Cardiac septum (tissue), 1 donor: ENCODE measurements at regions of chr13 and their contacts with region 1.

Region 1: GRCh38 chr13:47521890-47522487 is 479.1 kb downstream of the SUCLA2 start:
- DNase-seq: no peak

Region 2: DNA sequence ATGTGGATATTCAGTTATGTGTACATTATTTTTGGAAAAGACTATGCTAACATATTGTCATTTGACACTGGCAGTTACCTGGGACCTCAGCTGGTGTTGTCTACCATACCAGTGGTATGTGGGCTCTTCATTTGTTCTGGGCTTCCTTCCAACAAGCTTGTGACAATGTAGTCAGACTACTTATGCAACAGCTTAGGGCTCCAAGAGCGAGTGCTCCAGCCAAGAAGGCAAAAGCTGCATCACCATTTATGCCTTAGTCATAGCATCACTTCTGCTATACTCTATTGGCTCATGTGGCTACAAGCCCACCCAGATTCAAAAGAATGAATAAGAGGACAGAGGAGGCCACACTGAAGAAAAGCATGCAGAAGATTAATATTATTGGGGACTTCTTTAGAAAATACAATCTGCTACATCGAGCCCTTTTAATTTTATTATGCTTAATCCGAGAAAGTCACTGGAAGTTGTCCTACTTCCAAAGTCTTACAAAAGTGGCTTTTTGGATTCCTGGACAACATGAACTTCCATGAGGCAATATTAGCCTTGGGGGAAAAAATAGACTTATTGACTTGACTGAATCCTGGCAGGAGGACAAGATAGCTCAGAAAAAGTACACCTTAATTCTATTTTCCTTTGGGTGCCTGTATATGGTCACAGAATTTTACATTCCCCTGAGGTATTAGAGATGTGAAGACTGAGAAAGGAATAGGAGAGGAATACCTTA is 95.7 kb before region 1 on chr13:
- intact Hi-C with region 1: loop called (anchors 10 kb)
- DNase-seq: no peak